Activated CD4-positive, alpha-beta T cell treated with anti-CD3 and anti-CD28 coated beads, Interleukin-2, amount 10 ng/mL, durations not matched to agents 24 days and 14 days (primary cell): ENCODE measurements at regions of chr11 and their contacts with region 1.

Region 1: GRCh38 chr11:118610804-118611795 is 3.7 kb downstream of the PHLDB1 start:
- DNase-seq: peak; percentile 96
- H3K4me3 Mint-ChIP-seq: peak overlapping the region; percentile 76
- H3K27ac Mint-ChIP-seq: peak overlapping the region; percentile 17
- H3K4me1 Mint-ChIP-seq: peaks cover 25% of the 10 kb centered on the region
- H3K27me3 Mint-ChIP-seq: peaks cover 36% of the 10 kb centered on the region

Region 2: DNA sequence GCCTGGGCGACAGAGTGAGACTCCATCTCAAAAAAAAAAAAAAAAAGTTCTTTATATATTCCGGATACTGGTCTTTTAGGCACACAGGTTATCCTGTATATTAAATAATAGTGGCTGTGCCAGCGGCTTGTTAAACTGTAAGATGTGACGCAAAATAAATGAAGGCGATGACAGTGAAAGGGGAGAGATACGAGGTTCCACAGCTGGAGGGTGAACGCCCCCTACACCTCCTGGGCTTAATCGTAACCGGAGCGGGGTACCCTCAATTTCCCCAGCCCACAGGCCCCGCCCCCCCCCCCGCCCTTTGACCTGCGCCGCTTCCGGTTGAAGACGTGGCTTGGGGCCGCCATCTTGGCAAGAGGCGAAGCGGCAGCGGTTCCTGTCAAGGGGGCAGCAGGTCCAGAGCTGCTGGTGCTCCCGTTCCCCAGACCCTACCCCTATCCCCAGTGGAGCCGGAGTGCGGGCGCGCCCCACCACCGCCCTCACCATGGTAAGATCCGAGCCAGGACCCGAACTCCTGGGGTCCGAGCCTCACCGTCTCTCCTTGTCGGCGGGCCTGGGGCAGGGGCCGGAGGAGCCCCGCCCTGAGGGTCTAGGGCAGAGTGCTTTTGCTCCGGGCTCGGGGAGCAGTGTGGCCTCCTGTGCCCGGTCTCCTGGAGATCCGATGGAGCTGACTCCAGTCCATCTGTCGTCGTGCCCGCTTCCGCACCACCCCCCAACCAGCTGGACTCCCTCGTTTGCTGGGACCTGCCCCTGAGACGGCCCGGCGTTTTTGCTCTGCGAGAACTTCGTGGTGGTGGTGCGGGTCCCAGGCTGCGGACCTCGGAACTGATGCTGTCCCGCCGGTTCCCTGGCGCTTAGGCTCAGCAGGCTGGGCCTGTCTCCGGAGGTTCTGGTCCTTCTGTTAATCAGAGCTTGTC is 38.8 kb before region 1 on chr11 and contains the start of gene ARCN1:
- intact Hi-C with region 1: loop called (anchors 2 kb)
- DNase-seq: peak; percentile 93
- H3K4me3 Mint-ChIP-seq: peak within 1 kb of the TSS; percentile 97
- H3K27ac Mint-ChIP-seq: peak within 1 kb of the TSS; percentile 93
- H3K4me1 Mint-ChIP-seq: peaks cover 34% of the 10 kb centered on the region
- H3K27me3 Mint-ChIP-seq: no peaks in the 10 kb centered on the region
- total RNA-seq, gene ARCN1: 147 and 150 TPM in 2 replicates

Region 3: DNA sequence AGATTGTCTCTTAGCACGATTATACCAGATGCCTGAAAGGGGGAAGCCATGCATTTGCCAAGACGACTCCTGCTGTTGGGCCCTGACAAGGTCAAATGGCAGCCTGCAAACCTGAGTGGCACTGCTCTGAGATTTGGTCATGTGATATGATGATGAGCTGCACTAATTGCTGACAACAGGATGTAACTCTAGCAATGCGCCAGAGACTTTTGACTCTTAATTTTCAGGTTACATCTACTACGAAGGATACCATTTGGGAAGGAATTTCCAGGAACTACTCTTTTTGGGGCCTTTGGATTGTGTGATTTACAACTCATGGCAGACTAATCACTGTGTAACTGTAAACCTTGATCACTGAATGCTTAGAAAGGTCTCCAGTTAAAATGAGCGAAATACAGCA is 55.3 kb after region 1 on chr11:
- intact Hi-C with region 1: no loop called
- DNase-seq: no peak
- H3K4me3 Mint-ChIP-seq: no peak overlapping the region
- H3K27ac Mint-ChIP-seq: no peak overlapping the region
- H3K4me1 Mint-ChIP-seq: peaks cover 3% of the 10 kb centered on the region
- H3K27me3 Mint-ChIP-seq: peaks cover 18% of the 10 kb centered on the region